Caco-2 (cell line): ENCODE measurements at regions of chr19 and their contacts with region 1.

Region 1: GRCh38 chr19:46186101-46187100 is 38.4 kb downstream of the IGFL2 start:
- DNase-seq: no peak
- H3K4me3 ChIP-seq: no peak overlapping the region
- H3K4me3 Mint-ChIP-seq: no peak overlapping the region
- H3K27ac Mint-ChIP-seq: no peak overlapping the region
- H3K4me1 ChIP-seq: peaks cover 10% of the 10 kb centered on the region
- H3K4me1 Mint-ChIP-seq: peaks cover 24% of the 10 kb centered on the region
- H3K27me3 ChIP-seq: no peaks in the 10 kb centered on the region
- H3K27me3 Mint-ChIP-seq: no peaks in the 10 kb centered on the region
- CTCF ChIP-seq: no peak

Region 2: GRCh38 chr19:46021531-46022041 is 164.8 kb before region 1 on chr19:
- CTCF ChIA-PET with region 1: no interaction called
- POLR2A ChIA-PET with region 1: no interaction called
- intact Hi-C with region 1: loop called (anchors 5 kb)
- DNase-seq: peak in 1 of 2 experiments; percentile 26
- H3K4me3 ChIP-seq: no peak overlapping the region
- H3K4me3 Mint-ChIP-seq: no peak overlapping the region
- H3K27ac Mint-ChIP-seq: no peak overlapping the region
- H3K4me1 ChIP-seq: peaks cover under 1% of the 10 kb centered on the region; the same call in 1 of the 2 replicates
- H3K4me1 Mint-ChIP-seq: peaks cover 8% of the 10 kb centered on the region
- H3K27me3 ChIP-seq: no peaks in the 10 kb centered on the region
- H3K27me3 Mint-ChIP-seq: no peaks in the 10 kb centered on the region
- CTCF ChIP-seq: no peak

Region 3: DNA sequence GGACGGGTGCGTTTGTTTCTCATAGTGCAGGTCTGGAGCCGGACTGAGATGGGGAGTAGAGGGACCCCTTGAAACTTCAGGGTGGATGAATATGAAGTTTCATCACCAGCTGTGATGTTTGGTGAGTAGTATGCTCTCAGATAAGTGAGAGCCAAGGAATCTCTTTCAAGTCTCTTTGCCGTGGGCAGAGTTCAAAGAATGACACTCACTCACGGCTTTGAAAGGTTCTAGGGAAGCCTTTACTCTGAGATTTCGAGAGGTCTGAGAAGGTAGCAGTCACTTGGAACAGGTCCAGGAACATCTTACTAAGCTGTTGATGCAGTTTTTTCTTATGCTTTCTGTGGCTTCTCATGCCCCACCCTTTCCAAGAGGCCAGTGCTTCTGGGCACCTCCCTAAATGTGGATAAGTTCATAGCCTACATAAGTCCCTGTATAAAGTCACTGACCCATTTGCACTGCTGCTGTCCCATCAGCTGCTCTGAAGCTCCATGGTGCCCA is 38.6 kb before region 1 on chr19 and contains the start of gene IGFL2:
- CTCF ChIA-PET with region 1: interaction called, 7 read pairs
- POLR2A ChIA-PET with region 1: interaction called, 4 read pairs
- intact Hi-C with region 1: loop called (anchors 5 kb)
- DNase-seq: peak; percentile 76 to 83
- H3K4me3 ChIP-seq: peak within 1 kb of the TSS; percentile 11
- H3K4me3 Mint-ChIP-seq: peak within 1 kb of the TSS; percentile 81
- H3K27ac Mint-ChIP-seq: peak within 1 kb of the TSS; percentile 92
- H3K4me1 ChIP-seq: peaks cover 42% of the 10 kb centered on the region
- H3K4me1 Mint-ChIP-seq: peaks cover 45% of the 10 kb centered on the region
- H3K27me3 ChIP-seq: no peaks in the 10 kb centered on the region
- H3K27me3 Mint-ChIP-seq: no peaks in the 10 kb centered on the region
- CTCF ChIP-seq: no peak
- total RNA-seq, gene IGFL2: 57.7 and 64.7 TPM in 2 replicates